ENCODE measurements at regions of chr22 and their contacts with region 1.

Region 1: DNA sequence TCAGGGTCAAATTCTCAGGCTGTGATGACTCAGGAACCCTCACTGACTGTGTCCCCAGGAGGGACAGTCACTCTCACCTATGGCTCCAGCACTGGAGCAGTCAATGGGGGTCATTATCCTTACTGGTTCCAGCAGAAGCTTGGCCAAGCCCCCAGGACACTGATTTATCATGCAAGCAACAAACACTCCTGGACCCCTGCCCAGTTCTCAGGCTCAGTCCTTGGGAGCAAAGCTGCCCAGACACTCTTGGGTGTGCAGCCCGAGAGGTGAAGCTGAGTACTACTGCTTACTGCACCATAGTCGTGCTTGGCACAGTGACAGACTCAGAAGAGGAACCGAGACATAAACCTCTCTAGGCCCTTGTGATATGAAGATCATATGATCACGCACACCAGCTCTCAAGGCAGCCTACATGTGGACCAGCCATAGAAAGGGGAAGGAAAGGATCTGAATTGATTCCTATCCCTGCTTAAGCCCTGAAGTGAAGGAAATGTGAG is 58.2 kb downstream of the ZNF280B start:
- DNase-seq: peak; percentile 90
- ATAC-seq: peak; percentile 97
- H3K4me3 ChIP-seq: no peak overlapping the region
- H3K4me3 Mint-ChIP-seq: peak overlapping the region; percentile 59
- H3K27ac ChIP-seq: peak overlapping the region; percentile 36 to 76
- H3K27ac Mint-ChIP-seq: peak overlapping the region; percentile 78
- H3K4me1 ChIP-seq: peaks cover 30 to 32% of the 10 kb centered on the region in 2 donors
- H3K4me1 Mint-ChIP-seq: peaks cover 33% of the 10 kb centered on the region
- H3K27me3 ChIP-seq: no peaks in the 10 kb centered on the region
- H3K27me3 Mint-ChIP-seq: no peaks in the 10 kb centered on the region
- CTCF ChIP-seq: peak; percentile 31

Region 2: DNA sequence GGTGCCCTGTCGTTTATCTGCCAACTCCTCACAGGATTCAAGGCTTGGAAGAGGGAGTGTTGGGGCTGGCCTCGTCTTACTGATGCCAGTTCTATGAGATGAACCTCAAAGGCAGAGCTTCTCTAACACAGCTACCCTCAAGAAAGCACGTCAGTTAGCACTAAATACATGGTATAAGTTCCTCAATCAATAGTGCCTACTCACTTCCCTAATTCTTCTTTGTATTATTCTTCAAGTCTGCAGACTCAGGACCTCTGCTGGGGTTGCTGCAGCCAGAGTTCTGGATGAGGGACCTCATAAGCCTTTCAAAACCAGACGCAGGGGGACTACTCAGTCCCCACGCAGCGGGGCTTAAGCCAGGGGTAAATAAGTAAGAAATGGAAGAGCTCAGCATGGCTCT is 87.5 kb before region 1 on chr22:
- CTCF ChIA-PET with region 1: no interaction called
- POLR2A ChIA-PET with region 1: no interaction called
- intact Hi-C with region 1: no loop called
- DNase-seq: peak; percentile 59
- ATAC-seq: peak; percentile 69
- H3K4me3 ChIP-seq: no peak overlapping the region
- H3K4me3 Mint-ChIP-seq: no peak overlapping the region
- H3K27ac ChIP-seq: no peak overlapping the region
- H3K27ac Mint-ChIP-seq: no peak overlapping the region
- H3K4me1 ChIP-seq: peaks cover 37 to 45% of the 10 kb centered on the region in 2 donors
- H3K4me1 Mint-ChIP-seq: peaks cover 69% of the 10 kb centered on the region
- H3K27me3 ChIP-seq: no peaks in the 10 kb centered on the region
- H3K27me3 Mint-ChIP-seq: no peaks in the 10 kb centered on the region
- CTCF ChIP-seq: no peak

Region 3: GRCh38 chr22:22463855-22464540 is 13.6 kb after region 1 on chr22:
- CTCF ChIA-PET with region 1: interaction called, 41 read pairs
- POLR2A ChIA-PET with region 1: no interaction called
- intact Hi-C with region 1: no loop called
- DNase-seq: peak; percentile 84
- ATAC-seq: peak; percentile 47
- H3K4me3 ChIP-seq: peak overlapping the region in 1 of 5 experiments; percentile 46
- H3K4me3 Mint-ChIP-seq: no peak overlapping the region
- H3K27ac ChIP-seq: no peak overlapping the region
- H3K27ac Mint-ChIP-seq: peak overlapping the region; percentile 16
- H3K4me1 ChIP-seq: peaks cover 13 to 15% of the 10 kb centered on the region in 2 donors
- H3K4me1 Mint-ChIP-seq: peaks cover 19% of the 10 kb centered on the region
- H3K27me3 ChIP-seq: no peaks in the 10 kb centered on the region
- H3K27me3 Mint-ChIP-seq: peaks cover 3% of the 10 kb centered on the region
- CTCF ChIP-seq: peak; percentile 88

Region 4: GRCh38 chr22:22508274-22509176 is 58.1 kb after region 1 on chr22 and contains the start of gene ZNF280B:
- CTCF ChIA-PET with region 1: no interaction called
- POLR2A ChIA-PET with region 1: no interaction called
- intact Hi-C with region 1: loop called (anchors 5 kb)
- DNase-seq: peak; percentile 91
- ATAC-seq: peak; percentile 99
- H3K4me3 ChIP-seq: peak within 1 kb of the TSS; percentile 4 to 80 (median 73)
- H3K4me3 Mint-ChIP-seq: peak within 1 kb of the TSS; percentile 71
- H3K27ac ChIP-seq: peak within 1 kb of the TSS in 1 of 2 donors; percentile 67
- H3K27ac Mint-ChIP-seq: peak within 1 kb of the TSS; percentile 59
- H3K4me1 ChIP-seq: peaks cover 7 to 16% of the 10 kb centered on the region in 2 donors
- H3K4me1 Mint-ChIP-seq: peaks cover 10% of the 10 kb centered on the region
- H3K27me3 ChIP-seq: peaks cover 0 to 1% (median 0%) of the 10 kb centered on the region in 4 experiments
- H3K27me3 Mint-ChIP-seq: peaks cover 2% of the 10 kb centered on the region
- CTCF ChIP-seq: peak; percentile 71
- total RNA-seq, gene ZNF280B: 2.9 and 3.5 TPM in 2 replicates

Measured in B cell (primary cell).